GM10248 (cell line): ENCODE measurements at regions of chr12 and their contacts with region 1.

Region 1: DNA sequence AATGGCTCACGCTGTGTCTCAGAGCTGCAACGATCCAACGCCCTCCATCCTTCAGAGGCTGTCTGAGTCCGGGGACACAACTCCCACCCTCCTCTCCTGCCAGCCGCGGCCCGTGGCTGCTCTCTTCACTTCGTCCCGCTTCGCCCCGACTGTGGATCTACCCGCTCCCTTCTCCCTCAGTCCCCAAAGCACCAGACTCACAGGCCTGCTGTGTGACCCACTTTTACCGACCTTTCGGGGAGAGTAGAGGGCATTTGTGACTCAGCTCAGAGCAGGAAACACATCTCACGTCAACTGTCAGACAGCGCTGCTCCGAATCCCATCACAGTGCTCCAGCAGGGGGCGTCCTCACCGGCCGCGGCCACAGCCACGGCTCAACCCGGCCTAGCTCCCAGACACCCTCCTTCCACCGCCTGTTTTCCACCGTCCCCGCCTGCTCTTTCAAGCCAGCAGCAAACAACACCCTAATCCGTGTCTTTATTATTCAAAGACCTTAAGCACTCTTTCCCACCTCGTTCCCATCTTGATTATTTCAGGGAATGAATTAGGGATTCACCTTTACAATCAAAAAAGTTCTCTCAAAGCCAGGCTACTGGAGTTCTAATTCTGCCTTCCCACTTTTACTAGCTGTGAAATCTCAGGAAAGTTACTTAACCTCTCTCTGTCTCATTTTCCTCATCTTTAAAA is 5.0 kb upstream of the AQP2 start:
- DNase-seq: peak; percentile 92
- CTCF ChIP-seq: peak; percentile 90

Region 2: GRCh38 chr12:49930515-49931288 is 14.8 kb before region 1 on chr12:
- CTCF ChIA-PET with region 1: interaction called, 65 read pairs
- POLR2A ChIA-PET with region 1: no interaction called
- DNase-seq: no peak
- CTCF ChIP-seq: no peak

Region 3: GRCh38 chr12:49959570-49960465 is 14.3 kb after region 1 on chr12:
- CTCF ChIA-PET with region 1: interaction called, 56 read pairs
- POLR2A ChIA-PET with region 1: no interaction called
- DNase-seq: no peak
- CTCF ChIP-seq: no peak

Region 4: DNA sequence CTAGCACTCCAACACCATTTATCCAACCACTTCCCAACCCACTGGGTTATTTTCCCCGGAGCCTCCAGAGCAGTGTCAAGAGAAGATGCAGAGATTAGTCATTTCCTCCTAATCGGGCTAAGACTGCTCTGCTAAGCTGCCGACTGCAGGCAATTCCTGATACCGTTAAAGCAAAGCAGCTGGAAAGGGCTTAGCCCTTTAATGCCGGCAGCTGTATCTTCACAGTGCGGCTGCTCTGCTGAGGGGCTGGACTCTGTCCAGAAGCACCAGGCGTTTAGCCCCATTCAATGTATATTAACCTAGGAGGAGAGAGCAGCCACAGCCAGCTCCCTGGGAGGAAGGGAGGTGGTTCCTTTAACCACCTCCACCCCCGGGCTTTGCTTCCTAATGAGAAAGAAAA is 38.4 kb after region 1 on chr12:
- CTCF ChIA-PET with region 1: interaction called, 10 read pairs
- POLR2A ChIA-PET with region 1: no interaction called
- DNase-seq: peak; percentile 11
- CTCF ChIP-seq: no peak

Region 5: DNA sequence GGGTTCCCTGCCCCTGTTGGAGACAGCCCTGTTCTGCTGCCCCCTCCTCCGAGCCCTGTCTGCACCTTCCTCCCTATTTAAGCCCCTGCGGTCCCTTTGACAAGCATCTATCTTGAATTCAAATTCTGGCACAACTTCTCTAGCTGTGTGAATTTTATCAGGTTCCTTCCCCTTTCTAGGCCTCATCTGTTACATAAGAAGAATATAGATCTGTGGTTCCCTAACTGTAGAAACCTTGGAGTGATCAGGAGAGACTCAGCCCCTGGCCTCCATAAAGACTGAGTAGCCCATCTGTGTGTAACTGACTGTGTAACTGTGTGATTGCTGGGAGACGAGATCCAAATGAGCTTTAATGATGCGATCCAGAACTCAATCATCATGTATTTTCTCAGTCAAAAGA is 92.8 kb after region 1 on chr12:
- CTCF ChIA-PET with region 1: interaction called, 10 read pairs
- POLR2A ChIA-PET with region 1: no interaction called
- DNase-seq: no peak
- CTCF ChIP-seq: no peak

Region 6: GRCh38 chr12:50049254-50050118 is 103.9 kb after region 1 on chr12:
- CTCF ChIA-PET with region 1: no interaction called
- POLR2A ChIA-PET with region 1: no interaction called
- DNase-seq: no peak
- CTCF ChIP-seq: no peak